ENCODE measurements at regions of chr9 and their contacts with region 1.

Region 1: GRCh38 chr9:126781186-126782052 is 23.4 kb upstream of the ZBTB43 start:
- DNase-seq: peak; percentile 73 to 78
- ATAC-seq: peak; percentile 92 to 98
- H3K4me3 ChIP-seq: peak overlapping the region; percentile 32
- H3K27ac ChIP-seq: peak overlapping the region; percentile 64 to 83; a peak in 5 of 6 replicates
- H3K4me1 ChIP-seq: 0 out of 3 replicates have a peak, but pooled peaks cover 4% of the 10 kb centered on the region
- CTCF ChIP-seq: peak; percentile 92
- EP300 ChIP-seq: no peak
- POLR2A ChIP-seq: no peak
- RAD21 ChIP-seq: peak; percentile 92 to 97

Region 2: DNA sequence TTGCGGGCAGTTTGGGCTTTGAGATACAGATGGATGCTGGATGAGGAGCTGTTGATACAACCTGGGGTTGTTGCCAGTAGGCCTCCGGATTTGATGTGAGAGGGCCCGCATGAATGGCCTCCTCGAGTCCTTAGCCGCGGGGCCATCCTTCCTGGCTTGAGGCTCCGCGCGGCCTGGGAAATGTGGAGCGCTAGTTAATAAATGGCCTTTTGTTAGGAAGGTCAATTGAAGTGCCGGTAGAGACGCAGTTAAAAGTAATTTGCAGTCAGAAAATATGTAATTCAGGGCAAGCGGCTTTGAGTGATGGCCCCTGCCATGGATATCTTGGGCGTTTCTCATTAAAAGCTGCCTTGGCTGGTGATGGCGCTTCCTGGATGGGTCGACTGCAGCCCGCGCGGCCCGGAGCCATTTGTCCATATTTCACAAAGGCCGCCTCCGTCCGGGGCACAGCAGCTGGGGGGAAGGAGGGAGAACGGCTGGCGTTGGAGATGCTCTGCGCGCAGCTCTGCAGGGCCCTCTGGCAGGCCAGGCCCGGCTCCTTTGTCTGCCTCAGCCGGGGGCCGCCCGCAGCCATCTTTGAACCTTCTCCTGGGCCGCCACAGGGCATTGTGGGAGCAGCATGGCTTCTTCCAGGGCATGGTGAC is 443.6 kb before region 1 on chr9:
- CTCF ChIA-PET with region 1: no interaction called
- POLR2A ChIA-PET with region 1: no interaction called
- DNase-seq: no peak
- ATAC-seq: no peak
- H3K4me3 ChIP-seq: no peak overlapping the region
- H3K27ac ChIP-seq: no peak overlapping the region
- H3K4me1 ChIP-seq: 0 out of 3 replicates have a peak, but pooled peaks cover 9% of the 10 kb centered on the region
- CTCF ChIP-seq: no peak
- EP300 ChIP-seq: no peak
- POLR2A ChIP-seq: no peak
- RAD21 ChIP-seq: no peak

Region 3: DNA sequence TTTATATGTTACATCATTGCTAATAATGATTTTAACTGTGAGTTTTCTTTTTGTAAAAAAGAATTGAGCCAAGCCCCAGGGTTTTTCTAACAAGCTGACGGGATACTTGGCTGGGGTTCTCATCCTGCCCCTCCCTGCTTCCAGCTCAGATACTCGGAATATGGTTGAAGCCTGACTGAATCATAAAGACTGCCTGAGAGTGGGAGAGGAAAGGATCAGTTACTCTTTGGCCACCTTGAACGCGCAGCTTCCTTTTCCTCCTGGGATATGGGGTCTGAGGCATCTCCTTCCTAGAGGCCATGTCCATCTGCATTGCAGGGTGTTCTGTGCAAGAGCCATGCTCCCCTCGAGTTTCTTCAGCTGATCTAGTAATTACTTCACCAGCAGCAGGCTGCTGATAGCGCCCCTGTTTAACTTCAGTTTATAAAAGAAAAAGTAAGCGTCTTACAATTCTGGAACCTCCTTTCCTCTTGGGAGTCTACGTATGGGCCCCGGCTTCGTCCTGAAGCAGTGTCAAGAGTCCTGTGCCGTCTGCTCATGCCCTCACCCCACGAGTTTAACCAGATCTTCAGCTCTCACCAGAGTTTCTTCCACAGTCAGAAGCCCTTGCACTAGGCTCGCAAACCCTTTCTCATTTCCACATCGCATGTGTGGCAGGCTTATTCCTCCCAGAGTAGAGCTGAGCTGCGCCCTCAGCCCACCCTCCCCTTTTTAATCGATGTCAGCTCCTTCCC is 324.8 kb before region 1 on chr9:
- CTCF ChIA-PET with region 1: no interaction called
- POLR2A ChIA-PET with region 1: no interaction called
- DNase-seq: no peak
- ATAC-seq: no peak
- H3K4me3 ChIP-seq: no peak overlapping the region
- H3K27ac ChIP-seq: no peak overlapping the region
- H3K4me1 ChIP-seq: no peaks in the 10 kb centered on the region
- CTCF ChIP-seq: no peak
- EP300 ChIP-seq: no peak
- POLR2A ChIP-seq: no peak
- RAD21 ChIP-seq: no peak

Region 4: DNA sequence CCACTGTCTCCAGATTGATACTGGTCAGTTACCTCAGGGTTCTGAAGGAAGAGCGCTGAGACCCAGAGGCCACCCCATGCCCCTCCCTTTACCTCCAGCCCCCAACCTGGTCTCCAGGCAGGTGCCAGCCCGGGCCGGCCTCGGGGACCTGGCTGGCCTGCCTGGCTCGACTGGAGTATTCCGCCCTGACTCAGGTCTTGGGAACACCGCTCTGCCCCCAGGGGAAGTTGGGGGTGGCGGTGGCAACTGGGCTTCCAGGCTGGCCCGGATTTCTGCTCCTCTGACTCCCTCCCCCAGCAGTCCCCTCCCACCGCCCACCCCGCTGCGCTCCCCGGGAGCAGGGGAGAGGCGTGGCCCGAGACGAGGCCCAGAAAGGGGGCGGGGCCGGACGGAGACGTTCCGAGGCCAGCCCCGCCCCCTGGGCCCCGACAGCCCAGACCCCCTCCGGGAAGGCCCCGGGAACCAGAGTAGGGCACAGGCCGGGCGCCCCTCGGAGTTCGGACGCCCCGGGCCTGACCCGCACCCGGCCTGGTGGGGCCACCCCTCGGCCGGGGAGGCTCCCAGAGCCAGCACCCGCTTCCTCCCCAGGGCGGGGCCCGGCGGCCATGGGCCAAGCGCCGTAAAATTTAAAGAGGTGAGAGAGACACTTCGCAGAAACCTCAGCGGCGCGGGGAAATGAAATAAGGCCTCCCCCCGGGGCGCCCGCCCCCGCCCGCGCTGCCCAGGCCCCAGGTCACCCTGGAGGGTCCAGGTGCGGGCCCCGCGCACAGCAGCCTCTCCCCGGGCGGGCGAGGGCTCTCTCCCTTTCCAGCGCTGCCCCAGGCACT is 59.0 kb before region 1 on chr9:
- CTCF ChIA-PET with region 1: interaction called, 16 read pairs
- POLR2A ChIA-PET with region 1: no interaction called
- DNase-seq: peak; percentile 62 to 66
- ATAC-seq: peak; percentile 89 to 96
- H3K4me3 ChIP-seq: peak overlapping the region; percentile 86
- H3K27ac ChIP-seq: peak overlapping the region; percentile 90 to 93
- H3K4me1 ChIP-seq: 0 out of 3 replicates have a peak, but pooled peaks cover 5% of the 10 kb centered on the region
- CTCF ChIP-seq: no peak
- EP300 ChIP-seq: no peak
- POLR2A ChIP-seq: no peak
- RAD21 ChIP-seq: no peak

Region 5: DNA sequence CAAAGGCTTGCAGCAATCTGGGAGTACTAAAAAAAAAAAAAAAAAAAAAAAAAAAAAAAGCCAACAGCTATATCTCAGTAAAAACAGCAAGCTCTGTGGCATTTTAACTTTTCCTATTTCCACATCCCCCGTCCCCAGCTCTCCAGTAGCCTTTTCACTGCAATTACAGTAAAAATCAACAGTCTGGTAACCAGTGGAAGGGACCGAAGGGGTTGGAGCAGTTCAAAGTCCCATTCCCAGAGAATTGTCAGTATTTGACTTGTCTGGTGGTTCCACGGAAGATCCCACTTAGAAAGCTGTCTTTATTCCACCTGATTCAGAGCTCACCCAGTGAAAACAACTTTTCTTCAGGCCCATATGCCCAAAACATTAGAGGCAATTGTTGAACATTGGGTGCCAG is 48.4 kb before region 1 on chr9:
- CTCF ChIA-PET with region 1: interaction called, 10 read pairs
- POLR2A ChIA-PET with region 1: no interaction called
- DNase-seq: no peak
- ATAC-seq: no peak
- H3K4me3 ChIP-seq: no peak overlapping the region
- H3K27ac ChIP-seq: no peak overlapping the region
- H3K4me1 ChIP-seq: no peaks in the 10 kb centered on the region
- CTCF ChIP-seq: no peak
- EP300 ChIP-seq: no peak
- POLR2A ChIP-seq: no peak
- RAD21 ChIP-seq: no peak

Region 6: GRCh38 chr9:126752376-126752775 is 29.0 kb before region 1 on chr9:
- CTCF ChIA-PET with region 1: interaction called, 27 read pairs
- POLR2A ChIA-PET with region 1: no interaction called
- DNase-seq: no peak
- ATAC-seq: peak; percentile 44 to 56; a peak in 3 of 6 replicates
- H3K4me3 ChIP-seq: no peak overlapping the region
- H3K27ac ChIP-seq: no peak overlapping the region
- H3K4me1 ChIP-seq: no peaks in the 10 kb centered on the region
- CTCF ChIP-seq: no peak
- EP300 ChIP-seq: no peak
- POLR2A ChIP-seq: no peak
- RAD21 ChIP-seq: no peak

Region 7: GRCh38 chr9:126791406-126792151 is 10.2 kb after region 1 on chr9:
- CTCF ChIA-PET with region 1: interaction called, 50 read pairs
- POLR2A ChIA-PET with region 1: no interaction called
- DNase-seq: peak; percentile 87 to 90
- ATAC-seq: peak; percentile 89 to 90
- H3K4me3 ChIP-seq: no peak overlapping the region
- H3K27ac ChIP-seq: peak overlapping the region; percentile 75 to 90
- H3K4me1 ChIP-seq: peaks cover 59% of the 10 kb centered on the region
- CTCF ChIP-seq: no peak
- EP300 ChIP-seq: peak; percentile 70 to 87; a peak in 2 of 5 replicates
- POLR2A ChIP-seq: no peak
- RAD21 ChIP-seq: no peak; a peak in 1 of 5 replicates

Region 8: DNA sequence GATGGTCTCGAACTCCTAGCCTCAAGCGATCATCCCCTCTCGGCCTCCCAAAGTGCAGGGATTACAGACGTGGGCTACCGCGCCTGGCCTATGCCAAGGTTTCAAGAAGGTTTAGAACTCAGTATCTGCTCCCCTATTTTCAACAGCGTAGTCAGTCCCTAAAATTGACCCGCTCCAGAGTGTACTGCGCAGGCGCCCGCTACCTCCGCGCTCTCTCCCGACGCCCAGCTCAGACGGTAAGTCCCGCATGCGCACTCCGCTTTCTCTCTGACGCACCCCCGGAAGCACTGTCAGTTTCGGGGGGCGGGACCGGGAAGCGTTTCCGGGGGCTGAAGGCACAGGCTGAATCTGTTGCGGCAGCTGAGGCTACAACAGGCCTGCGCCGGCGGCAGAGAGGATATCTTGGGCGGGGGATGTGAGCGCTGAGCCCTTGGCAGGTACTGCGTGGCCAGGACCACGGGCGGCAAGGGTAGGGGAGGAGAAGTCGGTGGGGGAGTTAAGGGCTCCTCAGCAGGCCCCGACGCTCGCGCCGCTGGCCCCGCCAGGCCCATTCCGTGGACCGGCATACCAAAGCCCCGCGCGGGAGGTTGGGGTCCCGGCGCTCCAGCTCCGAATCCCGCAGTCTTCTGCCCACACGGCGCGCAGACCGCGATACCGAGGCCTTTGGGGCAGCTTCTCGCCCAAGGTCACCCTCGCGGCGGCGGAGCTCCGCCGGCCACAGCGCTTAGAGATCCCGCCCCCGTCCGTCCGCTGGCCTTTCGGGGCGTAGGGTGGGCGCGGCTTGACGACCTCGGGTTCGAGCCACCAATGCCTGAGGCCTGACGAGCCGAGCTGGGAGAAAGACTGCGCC is 23.5 kb after region 1 on chr9 and contains the start of gene ZBTB43:
- CTCF ChIA-PET with region 1: interaction called, 29 read pairs
- POLR2A ChIA-PET with region 1: no interaction called
- DNase-seq: peak; percentile 95 to 98
- ATAC-seq: peak; percentile 97
- H3K4me3 ChIP-seq: peak within 1 kb of the TSS; percentile 73
- H3K27ac ChIP-seq: peak within 1 kb of the TSS; percentile 76 to 94
- H3K4me1 ChIP-seq: peaks cover 28% of the 10 kb centered on the region
- CTCF ChIP-seq: no peak
- EP300 ChIP-seq: no peak
- POLR2A ChIP-seq: 0 out of 2 replicates have a peak, but pooled peaks have one; percentile 63
- RAD21 ChIP-seq: no peak
- polyA plus RNA-seq, gene ZBTB43: 9.9 and 11.7 TPM in 2 replicates